ENCODE measurements at regions of chr2 and their contacts with region 1.

Region 1: GRCh38 chr2:158006961-158007719 is 94.5 kb upstream of the UPP2 start:
- DNase-seq: no peak
- ATAC-seq: no peak

Region 2: DNA sequence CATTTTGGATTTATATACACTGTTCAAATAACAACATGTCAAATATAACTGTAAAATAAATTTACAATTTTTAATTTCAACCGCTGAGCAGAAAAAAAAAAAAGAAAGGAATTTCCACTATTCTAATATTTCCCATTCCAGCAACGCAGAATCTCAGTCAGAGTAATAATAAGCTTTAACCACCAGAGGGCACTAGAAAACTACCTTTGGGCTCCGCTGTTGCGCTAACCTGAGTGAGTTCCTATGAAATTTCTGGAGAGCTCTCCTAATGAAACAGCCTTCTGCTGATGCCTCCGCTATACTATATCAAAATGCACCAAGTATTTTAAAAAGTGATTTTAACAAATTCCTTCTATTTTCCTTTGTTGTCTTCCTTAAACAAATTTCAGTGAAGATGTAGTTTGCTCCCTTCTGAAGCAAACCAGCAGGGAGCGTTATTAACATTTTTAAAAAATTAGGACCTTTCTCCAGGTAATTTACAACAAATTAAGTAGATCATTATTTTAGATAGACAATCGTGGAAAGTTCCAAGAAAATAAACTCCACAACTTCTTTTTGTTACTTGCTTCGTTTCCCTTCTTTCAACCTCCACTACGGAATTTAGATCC is 704.5 kb before region 1 on chr2:
- intact Hi-C with region 1: loop called in 1 of 2 experiments (anchors 10 kb)
- DNase-seq: no peak
- ATAC-seq: peak; percentile 55 to 67

Region 3: GRCh38 chr2:157497638-157498314 is 509.4 kb before region 1 on chr2:
- intact Hi-C with region 1: loop called in 1 of 2 experiments (anchors 5 kb)
- DNase-seq: no peak
- ATAC-seq: peak; percentile 56 to 84

Region 4: GRCh38 chr2:157509744-157510143 is 497.4 kb before region 1 on chr2:
- intact Hi-C with region 1: no loop called
- DNase-seq: no peak
- ATAC-seq: no peak

Region 5: GRCh38 chr2:157769856-157770255 is 237.3 kb before region 1 on chr2:
- intact Hi-C with region 1: loop called in 1 of 2 experiments (anchors 5 kb)
- DNase-seq: no peak
- ATAC-seq: no peak

Region 6: GRCh38 chr2:157777427-157777826 is 229.7 kb before region 1 on chr2:
- intact Hi-C with region 1: loop called (anchors 2 to 5 kb)
- DNase-seq: peak; percentile 44
- ATAC-seq: peak in 1 of 2 donors; percentile 39

Region 7: DNA sequence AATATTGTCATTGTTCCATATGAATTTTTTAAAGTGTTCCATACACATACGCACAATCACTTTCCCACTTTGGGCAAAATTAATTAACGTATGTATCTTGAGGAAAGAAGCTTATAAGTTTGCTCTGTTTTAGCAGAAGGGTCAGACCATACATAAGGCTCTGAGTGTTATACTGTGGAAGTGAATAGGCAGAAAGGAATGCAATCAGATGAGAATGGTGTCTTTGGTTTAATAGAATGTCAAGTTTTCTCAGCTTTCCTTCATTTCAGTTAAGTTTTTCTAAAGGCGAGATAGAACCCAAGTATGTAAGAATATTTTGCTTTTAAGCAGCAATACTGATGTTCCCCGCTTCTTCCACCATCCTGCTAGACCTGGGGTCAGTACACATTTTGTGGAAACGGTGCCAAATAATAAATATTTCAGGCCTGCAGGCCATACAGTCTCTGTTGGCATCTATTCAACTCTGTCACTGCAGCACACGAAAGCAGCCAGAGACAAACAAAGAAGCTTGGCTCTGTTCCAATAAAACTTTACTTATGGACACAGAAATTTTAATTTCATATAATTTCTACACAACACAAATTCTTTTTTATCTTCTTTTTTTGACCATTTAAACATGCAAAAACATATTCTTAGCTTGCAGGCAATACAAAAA is 195.1 kb after region 1 on chr2:
- intact Hi-C with region 1: no loop called
- DNase-seq: no peak
- ATAC-seq: no peak

Measured in left cardiac atrium (tissue), 4 donors.